Activated CD4-positive, alpha-beta T cell treated with anti-CD3 and anti-CD28 coated beads, Interleukin-2, amount 10 ng/mL, durations not matched to agents 24 days and 14 days (primary cell): ENCODE measurements at regions of chr10 and their contacts with region 1.

Region 1: GRCh38 chr10:79463578-79464496 is 18.4 kb upstream of the ZCCHC24 start:
- DNase-seq: no peak
- H3K4me3 Mint-ChIP-seq: no peak overlapping the region
- H3K27ac Mint-ChIP-seq: no peak overlapping the region
- H3K4me1 Mint-ChIP-seq: peaks cover 2% of the 10 kb centered on the region
- H3K27me3 Mint-ChIP-seq: peaks cover 10% of the 10 kb centered on the region

Region 2: DNA sequence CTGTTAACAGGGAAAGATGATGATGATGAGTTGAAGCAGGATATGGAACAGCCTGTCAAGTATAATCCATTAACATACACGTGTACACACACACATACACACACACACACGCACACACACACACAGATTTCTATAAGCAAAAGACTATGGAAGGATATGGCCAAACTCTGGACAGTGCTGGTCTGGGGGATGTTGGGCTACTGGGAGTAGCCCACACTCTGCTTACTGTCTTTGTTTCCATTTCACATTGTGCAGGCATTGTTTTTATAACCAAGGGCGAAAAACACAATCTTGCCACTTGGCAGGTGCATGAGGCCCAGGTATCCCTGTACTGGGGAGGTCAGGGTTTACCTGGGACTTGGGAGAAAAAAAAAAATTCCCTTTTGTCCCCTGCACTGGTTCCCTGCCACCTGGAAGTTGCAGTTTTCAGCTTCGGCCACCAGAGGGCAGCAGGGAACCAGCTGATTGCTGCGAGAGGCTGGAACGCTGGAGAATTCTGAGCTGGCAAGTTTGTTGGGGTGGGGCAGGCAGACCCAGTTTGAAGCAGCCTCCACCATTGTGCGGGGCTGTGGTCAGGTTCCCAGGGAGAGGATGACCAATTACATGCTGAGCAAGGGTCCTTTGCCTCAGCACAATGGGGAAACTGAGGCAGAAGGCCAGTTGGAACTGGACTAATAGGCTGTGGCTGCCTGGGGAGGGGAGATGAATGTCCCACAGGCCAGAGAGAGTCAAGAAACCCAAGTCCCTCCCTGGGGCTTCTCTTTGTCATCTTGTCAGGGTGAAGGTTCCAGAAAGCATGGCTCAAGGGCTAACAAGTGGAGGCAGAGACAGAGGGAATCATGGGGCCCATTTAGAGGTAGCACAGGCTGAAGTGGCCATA is 89.3 kb before region 1 on chr10:
- intact Hi-C with region 1: loop called (anchors 1 kb)
- DNase-seq: peak; percentile 93
- H3K4me3 Mint-ChIP-seq: no peak overlapping the region
- H3K27ac Mint-ChIP-seq: peak overlapping the region; percentile 14
- H3K4me1 Mint-ChIP-seq: peaks cover 3% of the 10 kb centered on the region
- H3K27me3 Mint-ChIP-seq: peaks cover 16% of the 10 kb centered on the region

Region 3: DNA sequence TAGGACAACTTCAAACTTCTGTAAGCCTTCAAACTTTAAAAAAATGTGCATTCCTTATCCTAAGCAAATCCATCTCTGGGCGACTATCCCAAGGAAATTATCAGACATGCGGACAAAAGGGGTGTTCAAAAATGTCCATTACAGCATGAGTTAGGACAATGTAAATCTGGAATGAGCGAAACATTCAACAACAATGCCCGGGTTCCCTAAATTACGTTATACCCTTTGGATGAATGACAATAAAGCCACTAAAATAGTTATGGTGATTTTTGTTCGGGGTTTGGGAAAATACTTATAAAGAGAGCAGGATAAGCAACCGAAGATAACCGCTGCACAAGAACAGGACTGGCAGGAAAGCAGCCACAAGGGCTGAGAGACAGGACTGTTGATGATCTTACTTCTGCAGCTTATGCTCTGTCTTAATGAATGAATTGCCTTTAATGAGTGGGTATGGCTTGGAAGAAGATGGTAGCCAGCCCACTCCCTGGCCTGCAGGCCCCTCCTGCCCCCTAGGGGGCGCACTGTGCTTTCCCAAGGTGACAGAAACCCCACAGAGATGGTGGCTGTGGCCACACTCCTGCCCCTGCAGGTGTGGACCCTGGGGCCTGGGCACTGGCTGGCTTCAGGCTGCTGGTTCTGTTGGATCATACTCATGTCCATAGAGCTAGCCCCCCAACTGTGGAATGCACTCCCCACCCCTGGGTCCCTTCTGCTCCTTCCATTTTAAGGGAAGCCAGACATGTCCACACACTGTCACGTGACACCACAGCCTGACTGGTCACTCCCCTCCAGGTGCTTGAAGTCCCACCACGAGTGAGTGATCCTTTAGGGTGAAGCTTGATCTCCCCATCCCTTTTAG is 63.5 kb before region 1 on chr10:
- intact Hi-C with region 1: loop called (anchors 1 kb)
- DNase-seq: peak; percentile 87
- H3K4me3 Mint-ChIP-seq: no peak overlapping the region
- H3K27ac Mint-ChIP-seq: no peak overlapping the region
- H3K4me1 Mint-ChIP-seq: no peaks in the 10 kb centered on the region
- H3K27me3 Mint-ChIP-seq: peaks cover 7% of the 10 kb centered on the region

Region 4: GRCh38 chr10:79434821-79435251 is 29.0 kb before region 1 on chr10:
- intact Hi-C with region 1: loop called (anchors 5 kb)
- DNase-seq: no peak
- H3K4me3 Mint-ChIP-seq: peak overlapping the region; percentile 15
- H3K27ac Mint-ChIP-seq: peak overlapping the region; percentile 76
- H3K4me1 Mint-ChIP-seq: peaks cover 12% of the 10 kb centered on the region
- H3K27me3 Mint-ChIP-seq: peaks cover 11% of the 10 kb centered on the region

Region 5: GRCh38 chr10:79445141-79445976 is 18.5 kb before region 1 on chr10 and contains the start of gene ZCCHC24:
- intact Hi-C with region 1: loop called (anchors 1 kb)
- DNase-seq: peak; percentile 98
- H3K4me3 Mint-ChIP-seq: peak within 1 kb of the TSS; percentile 86
- H3K27ac Mint-ChIP-seq: peak within 1 kb of the TSS; percentile 66
- H3K4me1 Mint-ChIP-seq: peaks cover 22% of the 10 kb centered on the region
- H3K27me3 Mint-ChIP-seq: peaks cover 44% of the 10 kb centered on the region
- total RNA-seq, gene ZCCHC24: 0.66 and 1.4 TPM in 2 replicates